Calu3 (cell line): ENCODE measurements at regions of chr1 and their contacts with region 1.

Region 1: GRCh38 chr1:208652296-208653160 is 408.3 kb upstream of the PLXNA2 start:
- DNase-seq: peak; percentile 46
- H3K4me3 Mint-ChIP-seq: no peak overlapping the region
- H3K27ac Mint-ChIP-seq: no peak overlapping the region
- H3K4me1 Mint-ChIP-seq: no peaks in the 10 kb centered on the region
- H3K27me3 Mint-ChIP-seq: peaks cover 51% of the 10 kb centered on the region
- CTCF ChIP-seq: peak; percentile 69

Region 2: GRCh38 chr1:208520438-208521099 is 132.0 kb before region 1 on chr1:
- CTCF ChIA-PET with region 1: no interaction called
- intact Hi-C with region 1: no loop called
- DNase-seq: no peak
- H3K4me3 Mint-ChIP-seq: no peak overlapping the region
- H3K27ac Mint-ChIP-seq: no peak overlapping the region
- H3K4me1 Mint-ChIP-seq: no peaks in the 10 kb centered on the region
- H3K27me3 Mint-ChIP-seq: peaks cover 7% of the 10 kb centered on the region
- CTCF ChIP-seq: no peak

Region 3: DNA sequence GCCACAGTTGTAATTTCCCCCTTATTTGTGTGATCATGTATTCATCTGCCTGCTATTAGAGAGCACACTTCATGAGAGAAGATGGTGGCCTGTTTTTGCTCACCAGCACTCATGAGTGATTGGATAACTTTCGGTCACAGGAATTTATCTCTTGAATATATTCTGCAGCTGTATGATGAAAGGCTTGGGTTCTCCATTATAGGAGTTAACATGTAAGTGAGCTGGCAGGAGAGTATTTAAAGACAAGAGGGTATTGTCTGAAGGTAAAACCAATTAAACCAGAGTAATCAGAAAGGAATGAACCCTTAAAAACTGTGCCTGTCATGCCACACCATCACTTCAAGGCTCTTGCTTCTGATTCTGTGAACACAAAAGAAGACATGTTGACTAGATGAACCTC is 356.1 kb after region 1 on chr1:
- CTCF ChIA-PET with region 1: no interaction called
- intact Hi-C with region 1: loop called (anchors 10 kb)
- DNase-seq: no peak
- H3K4me3 Mint-ChIP-seq: no peak overlapping the region
- H3K27ac Mint-ChIP-seq: no peak overlapping the region
- H3K4me1 Mint-ChIP-seq: no peaks in the 10 kb centered on the region
- H3K27me3 Mint-ChIP-seq: peaks cover 12% of the 10 kb centered on the region
- CTCF ChIP-seq: no peak

Region 4: GRCh38 chr1:209207701-209208286 is 555.3 kb after region 1 on chr1:
- CTCF ChIA-PET with region 1: interaction called, 11 read pairs
- intact Hi-C with region 1: loop called (anchors 1 kb)
- DNase-seq: peak; percentile 55
- H3K4me3 Mint-ChIP-seq: no peak overlapping the region
- H3K27ac Mint-ChIP-seq: no peak overlapping the region
- H3K4me1 Mint-ChIP-seq: no peaks in the 10 kb centered on the region
- H3K27me3 Mint-ChIP-seq: peaks cover 91% of the 10 kb centered on the region
- CTCF ChIP-seq: peak; percentile 58

Region 5: GRCh38 chr1:209354111-209354839 is 701.7 kb after region 1 on chr1:
- CTCF ChIA-PET with region 1: no interaction called
- intact Hi-C with region 1: loop called (anchors 5 kb)
- DNase-seq: peak; percentile 82
- H3K4me3 Mint-ChIP-seq: no peak overlapping the region
- H3K27ac Mint-ChIP-seq: no peak overlapping the region
- H3K4me1 Mint-ChIP-seq: peaks cover 7% of the 10 kb centered on the region
- H3K27me3 Mint-ChIP-seq: no peaks in the 10 kb centered on the region
- CTCF ChIP-seq: peak; percentile 84